Right ventricle myocardium inferior (tissue), 1 donor: ENCODE measurements at regions of chr6 and their contacts with region 1.

Region 1: DNA sequence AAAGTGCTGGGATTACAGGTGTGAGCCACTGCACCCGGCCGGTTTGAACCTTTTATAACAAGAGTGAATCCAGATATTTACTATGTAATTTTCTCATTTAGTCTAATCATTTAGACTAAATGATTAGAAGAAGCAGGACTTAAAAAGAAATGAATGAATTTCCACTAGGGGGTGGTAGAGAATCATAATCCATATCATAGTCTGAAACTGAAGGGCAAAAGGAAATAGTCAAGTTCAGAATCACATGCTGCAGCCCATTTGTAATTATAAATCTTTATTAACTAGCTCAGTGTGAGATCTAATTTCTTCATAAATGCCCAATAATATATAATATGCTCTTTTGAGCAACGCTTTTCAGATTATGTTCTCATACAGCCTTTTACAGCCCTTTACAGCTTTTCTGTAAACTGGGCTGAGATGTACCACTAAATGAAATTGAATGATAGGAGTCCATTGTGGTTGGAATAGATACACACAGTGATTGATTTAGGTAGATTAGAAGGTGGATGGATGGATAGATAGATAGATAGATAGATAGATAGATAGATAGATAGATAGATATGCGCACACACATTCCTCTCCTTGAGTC is 31.8 kb downstream of the PSMB9 start:
- DNase-seq: no peak
- ATAC-seq: no peak

Region 2: DNA sequence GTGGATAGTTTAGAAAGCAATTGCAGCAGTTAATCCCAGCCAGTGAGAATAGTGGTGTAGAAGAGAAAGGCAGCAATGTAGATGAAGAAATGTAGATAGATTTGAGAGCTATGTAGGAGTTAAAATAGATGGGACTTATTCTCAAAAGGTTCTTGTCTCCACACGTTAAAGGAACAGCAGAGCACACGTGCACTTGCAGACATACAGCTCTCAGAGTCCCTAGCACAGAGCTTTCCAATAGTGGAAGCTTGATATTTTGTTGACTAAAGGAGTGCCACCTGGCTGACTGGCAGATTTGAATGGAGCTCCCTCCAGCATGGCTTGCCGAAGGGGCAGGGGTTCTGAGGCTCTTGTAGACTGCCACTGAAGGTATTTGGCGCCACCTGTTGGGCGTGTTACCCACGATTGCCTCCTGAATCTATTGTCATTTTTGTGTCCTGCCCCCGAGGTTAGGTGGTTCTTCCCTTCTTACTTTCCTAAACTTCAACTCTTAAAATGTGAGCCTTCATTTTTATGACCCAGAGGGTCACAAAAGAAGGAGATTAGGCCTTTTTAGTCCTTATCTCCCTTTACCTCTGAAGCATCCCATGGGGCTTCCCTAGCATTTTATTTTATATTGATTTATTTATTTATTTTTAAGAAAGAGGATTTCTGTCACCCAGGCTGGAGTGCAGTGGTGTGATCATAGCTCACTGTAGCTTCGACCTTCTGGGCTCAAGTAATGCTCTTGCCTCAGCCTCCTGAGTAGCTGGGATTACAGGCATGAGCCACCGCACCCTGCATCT is 99.0 kb after region 1 on chr6:
- intact Hi-C with region 1: loop called (anchors 1 kb)
- DNase-seq: peak; percentile 92
- ATAC-seq: peak; percentile 80

Region 3: GRCh38 chr6:33161354-33162331 is 275.9 kb after region 1 on chr6:
- intact Hi-C with region 1: no loop called
- DNase-seq: peak; percentile 92
- ATAC-seq: peak; percentile 91

Region 4: GRCh38 chr6:33344701-33345697 is 459.2 kb after region 1 on chr6:
- intact Hi-C with region 1: no loop called
- DNase-seq: no peak
- ATAC-seq: peak; percentile 23